ENCODE measurements at regions of chr5 and their contacts with region 1.

Region 1: DNA sequence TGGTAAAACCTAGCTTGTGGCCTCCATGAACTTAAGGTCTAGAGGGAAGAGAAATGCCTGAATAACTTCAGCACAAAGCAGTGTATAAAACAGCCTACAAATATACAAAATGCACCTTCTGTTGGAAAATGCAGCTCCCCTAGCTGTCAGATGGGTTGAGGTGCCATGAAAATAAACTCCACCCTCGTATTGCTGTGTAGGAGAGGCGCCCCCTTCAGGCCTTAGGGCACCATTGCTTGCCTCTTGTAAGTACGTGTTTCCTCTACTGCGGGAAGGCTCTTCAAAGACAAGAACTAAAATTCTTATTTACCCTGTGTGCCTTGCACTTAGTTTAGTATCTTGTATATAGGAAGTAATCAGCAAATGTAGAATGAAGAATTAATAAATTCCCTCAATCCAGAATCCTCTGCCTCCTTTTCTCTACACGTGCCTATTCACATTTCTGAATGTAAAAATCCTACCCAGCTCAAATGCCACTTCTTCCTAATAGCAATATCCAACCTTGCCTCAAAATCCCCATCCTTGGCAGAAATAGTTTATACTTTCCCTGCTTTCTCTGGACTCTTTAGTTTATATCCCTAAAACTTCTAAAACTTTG is 393.7 kb upstream of the PDE4D start:
- DNase-seq: peak; percentile 82 to 86 (median 83)
- H3K4me3 ChIP-seq: peak overlapping the region in 1 of 7 experiments; percentile 17
- H3K27ac ChIP-seq: no peak overlapping the region
- H3K4me1 ChIP-seq: peaks cover 3 to 27% (median 12%) of the 10 kb centered on the region in 4 experiments
- H3K27me3 ChIP-seq: no peaks in the 10 kb centered on the region

Region 2: GRCh38 chr5:59810041-59810440 is 477.2 kb before region 1 on chr5:
- CTCF ChIA-PET with region 1: interaction called, 11 read pairs
- POLR2A ChIA-PET with region 1: no interaction called
- DNase-seq: peak; percentile 73 to 82 (median 80)
- H3K4me3 ChIP-seq: peak overlapping the region in 3 of 7 experiments; percentile 27 to 66 (median 40)
- H3K27ac ChIP-seq: no peak overlapping the region
- H3K4me1 ChIP-seq: peaks cover 0 to 9% (median 2%) of the 10 kb centered on the region in 4 experiments
- H3K27me3 ChIP-seq: peaks cover 0 to 2% (median 0%) of the 10 kb centered on the region in 5 experiments

Region 3: DNA sequence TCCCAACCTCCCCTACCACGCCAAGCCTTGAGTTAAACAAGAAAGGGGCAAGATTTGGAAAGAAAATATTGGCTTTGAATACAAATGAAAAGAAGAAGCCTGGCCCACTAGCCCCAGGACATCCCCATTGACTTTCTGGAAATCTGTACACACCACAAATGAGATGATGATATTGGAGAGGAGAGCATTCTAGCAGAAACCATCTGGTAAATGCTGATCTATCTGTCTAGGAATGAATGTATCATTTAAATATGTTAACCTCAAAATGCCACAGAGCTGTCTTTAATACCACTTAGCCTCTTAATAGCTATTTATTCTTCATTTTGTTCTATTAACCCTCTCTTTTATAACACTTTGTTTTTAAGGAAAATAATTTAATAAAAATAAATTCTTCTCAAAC is 123.5 kb before region 1 on chr5:
- CTCF ChIA-PET with region 1: no interaction called
- POLR2A ChIA-PET with region 1: no interaction called
- DNase-seq: no peak
- H3K4me3 ChIP-seq: no peak overlapping the region
- H3K27ac ChIP-seq: no peak overlapping the region
- H3K4me1 ChIP-seq: no peaks in the 10 kb centered on the region
- H3K27me3 ChIP-seq: no peaks in the 10 kb centered on the region